ENCODE measurements at regions of chr12 and their contacts with region 1.

Region 1: GRCh38 chr12:95473884-95474659 is at the start of gene METAP2:
- DNase-seq: peak; percentile 98
- H3K4me3 Mint-ChIP-seq: peak within 1 kb of the TSS; percentile 90
- H3K27ac Mint-ChIP-seq: peak within 1 kb of the TSS; percentile 99
- H3K4me1 Mint-ChIP-seq: peaks cover 16% of the 10 kb centered on the region
- H3K27me3 Mint-ChIP-seq: no peaks in the 10 kb centered on the region
- CTCF ChIP-seq: no peak
- total RNA-seq, gene METAP2: 91.5 and 122 TPM in 2 replicates

Region 2: DNA sequence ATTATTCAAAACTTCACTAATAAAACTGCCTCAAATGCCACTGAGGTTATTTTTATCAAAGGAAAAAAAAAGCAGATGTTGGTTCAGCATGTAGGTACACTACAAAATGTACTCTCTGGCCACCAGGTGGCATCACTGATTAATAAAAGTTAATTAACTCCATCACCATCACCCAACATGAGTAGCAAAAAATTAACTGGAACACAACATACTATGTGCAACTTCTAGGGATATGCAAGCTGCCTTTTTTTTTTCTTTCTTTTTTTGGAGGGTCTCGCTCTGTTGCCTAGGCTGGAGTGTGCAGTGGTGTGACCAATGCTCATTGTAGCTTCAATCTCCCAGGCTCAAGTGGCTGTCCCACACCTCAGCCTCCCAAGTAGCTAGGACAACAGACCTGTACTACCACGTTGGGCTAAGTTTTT is 356.9 kb before region 1 on chr12:
- CTCF ChIA-PET with region 1: interaction called, 3 read pairs
- POLR2A ChIA-PET with region 1: interaction called, 7 read pairs
- intact Hi-C with region 1: loop called (anchors 2 kb)
- DNase-seq: peak; percentile 86
- H3K4me3 Mint-ChIP-seq: peak overlapping the region; percentile 38
- H3K27ac Mint-ChIP-seq: peak overlapping the region; percentile 78
- H3K4me1 Mint-ChIP-seq: peaks cover 28% of the 10 kb centered on the region
- H3K27me3 Mint-ChIP-seq: no peaks in the 10 kb centered on the region
- CTCF ChIP-seq: peak; percentile 48

Region 3: GRCh38 chr12:95286713-95287112 is 187.4 kb before region 1 on chr12:
- CTCF ChIA-PET with region 1: interaction called, 4 read pairs
- POLR2A ChIA-PET with region 1: interaction called, 13 read pairs
- intact Hi-C with region 1: no loop called
- DNase-seq: no peak
- H3K4me3 Mint-ChIP-seq: no peak overlapping the region
- H3K27ac Mint-ChIP-seq: peak overlapping the region; percentile 27
- H3K4me1 Mint-ChIP-seq: no peaks in the 10 kb centered on the region
- H3K27me3 Mint-ChIP-seq: no peaks in the 10 kb centered on the region
- CTCF ChIP-seq: no peak

Region 4: GRCh38 chr12:95318071-95318545 is 156.0 kb before region 1 on chr12:
- CTCF ChIA-PET with region 1: interaction called, 3 read pairs
- POLR2A ChIA-PET with region 1: interaction called, 6 read pairs
- intact Hi-C with region 1: loop called (anchors 10 kb)
- DNase-seq: peak; percentile 58
- H3K4me3 Mint-ChIP-seq: no peak overlapping the region
- H3K27ac Mint-ChIP-seq: peak overlapping the region; percentile 69
- H3K4me1 Mint-ChIP-seq: peaks cover 9% of the 10 kb centered on the region
- H3K27me3 Mint-ChIP-seq: no peaks in the 10 kb centered on the region
- CTCF ChIP-seq: no peak

Region 5: DNA sequence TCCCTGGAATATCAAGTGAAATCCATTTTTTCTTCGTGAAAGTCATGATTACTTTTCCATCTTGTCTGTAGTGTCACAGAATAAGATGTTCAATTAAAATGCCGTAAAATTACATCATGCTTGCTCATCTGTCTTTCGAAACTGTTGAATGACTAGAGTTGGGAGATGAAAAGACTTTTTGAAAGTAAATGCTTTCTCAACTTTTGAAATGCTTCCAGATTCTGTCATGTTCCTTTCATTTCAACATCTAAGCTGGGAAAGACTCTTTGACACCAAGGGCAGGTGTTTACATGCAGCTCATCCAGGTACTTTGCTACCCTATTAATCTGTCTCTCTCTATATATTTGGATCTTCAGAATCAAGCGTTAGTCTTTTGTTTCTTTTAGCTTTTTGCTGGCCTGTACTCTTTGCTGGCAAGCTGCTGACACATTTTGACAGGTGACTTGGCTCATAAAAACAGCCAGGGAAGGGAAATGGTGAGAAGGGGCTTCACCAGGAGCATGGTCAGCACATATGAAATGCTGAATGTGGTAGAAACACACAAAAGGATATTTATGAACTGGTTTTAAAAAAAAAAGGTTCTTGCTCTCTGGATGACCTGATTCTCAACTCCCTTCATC is 77.1 kb before region 1 on chr12:
- CTCF ChIA-PET with region 1: no interaction called
- POLR2A ChIA-PET with region 1: interaction called, 81 read pairs
- intact Hi-C with region 1: loop called (anchors 5 kb)
- DNase-seq: peak; percentile 94
- H3K4me3 Mint-ChIP-seq: peak overlapping the region; percentile 3
- H3K27ac Mint-ChIP-seq: peak overlapping the region; percentile 34
- H3K4me1 Mint-ChIP-seq: peaks cover 19% of the 10 kb centered on the region
- H3K27me3 Mint-ChIP-seq: peaks cover 11% of the 10 kb centered on the region
- CTCF ChIP-seq: no peak

Region 6: GRCh38 chr12:95440401-95440800 is 33.7 kb before region 1 on chr12:
- CTCF ChIA-PET with region 1: no interaction called
- POLR2A ChIA-PET with region 1: no interaction called
- intact Hi-C with region 1: no loop called
- DNase-seq: peak; percentile 4
- H3K4me3 Mint-ChIP-seq: no peak overlapping the region
- H3K27ac Mint-ChIP-seq: no peak overlapping the region
- H3K4me1 Mint-ChIP-seq: no peaks in the 10 kb centered on the region
- H3K27me3 Mint-ChIP-seq: no peaks in the 10 kb centered on the region
- CTCF ChIP-seq: no peak

Region 7: DNA sequence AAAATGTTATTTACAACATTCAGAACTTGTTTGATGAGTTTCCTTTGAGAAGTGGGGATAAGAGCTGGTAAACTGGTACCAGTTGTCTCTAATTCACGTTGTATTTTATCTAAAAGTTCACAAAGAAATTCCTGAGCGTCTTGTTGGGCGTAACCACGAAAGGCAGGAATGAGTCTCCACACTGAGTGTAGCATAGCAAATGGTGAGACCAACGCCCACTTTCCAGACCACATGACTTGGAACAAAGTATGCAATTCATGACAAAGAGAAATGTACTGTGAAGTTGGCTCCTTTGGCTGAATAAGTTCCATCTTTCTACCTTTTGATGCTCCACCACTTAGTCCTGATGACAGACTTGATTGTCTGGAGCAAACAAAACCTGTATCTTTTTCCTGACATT is 58.8 kb after region 1 on chr12:
- CTCF ChIA-PET with region 1: no interaction called
- POLR2A ChIA-PET with region 1: interaction called, 10 read pairs
- intact Hi-C with region 1: no loop called
- DNase-seq: no peak
- H3K4me3 Mint-ChIP-seq: no peak overlapping the region
- H3K27ac Mint-ChIP-seq: no peak overlapping the region
- H3K4me1 Mint-ChIP-seq: peaks cover 18% of the 10 kb centered on the region
- H3K27me3 Mint-ChIP-seq: no peaks in the 10 kb centered on the region
- CTCF ChIP-seq: no peak